B cell (primary cell): ENCODE measurements at regions of chr19 and their contacts with region 1.

Region 1: GRCh38 chr19:34145741-34146202 is 26.5 kb upstream of the LSM14A start:
- DNase-seq: peak; percentile 74
- ATAC-seq: peak; percentile 57
- H3K4me3 ChIP-seq: no peak overlapping the region
- H3K4me3 Mint-ChIP-seq: no peak overlapping the region
- H3K27ac ChIP-seq: no peak overlapping the region
- H3K27ac Mint-ChIP-seq: no peak overlapping the region
- H3K4me1 ChIP-seq: peaks cover 0 to 3% of the 10 kb centered on the region in 2 donors
- H3K4me1 Mint-ChIP-seq: no peaks in the 10 kb centered on the region
- H3K27me3 ChIP-seq: no peaks in the 10 kb centered on the region
- H3K27me3 Mint-ChIP-seq: no peaks in the 10 kb centered on the region
- CTCF ChIP-seq: peak; percentile 88

Region 2: GRCh38 chr19:33778089-33778791 is 367.5 kb before region 1 on chr19:
- CTCF ChIA-PET with region 1: interaction called, 29 read pairs
- POLR2A ChIA-PET with region 1: no interaction called
- intact Hi-C with region 1: no loop called
- DNase-seq: peak; percentile 87
- ATAC-seq: peak; percentile 100
- H3K4me3 ChIP-seq: no peak overlapping the region
- H3K4me3 Mint-ChIP-seq: no peak overlapping the region
- H3K27ac ChIP-seq: no peak overlapping the region
- H3K27ac Mint-ChIP-seq: no peak overlapping the region
- H3K4me1 ChIP-seq: peaks cover 3 to 4% of the 10 kb centered on the region in 2 donors
- H3K4me1 Mint-ChIP-seq: peaks cover 7% of the 10 kb centered on the region
- H3K27me3 ChIP-seq: peaks cover 0 to 27% (median 2%) of the 10 kb centered on the region in 4 experiments
- H3K27me3 Mint-ChIP-seq: peaks cover 50% of the 10 kb centered on the region
- CTCF ChIP-seq: peak; percentile 100

Region 3: GRCh38 chr19:33795370-33796163 is 350.2 kb before region 1 on chr19:
- CTCF ChIA-PET with region 1: interaction called, 8 read pairs
- POLR2A ChIA-PET with region 1: no interaction called
- intact Hi-C with region 1: loop called (anchors 5 kb)
- DNase-seq: peak; percentile 62
- ATAC-seq: peak; percentile 74
- H3K4me3 ChIP-seq: peak overlapping the region; percentile 23 to 65 (median 55)
- H3K4me3 Mint-ChIP-seq: peak overlapping the region; percentile 81
- H3K27ac ChIP-seq: no peak overlapping the region
- H3K27ac Mint-ChIP-seq: no peak overlapping the region
- H3K4me1 ChIP-seq: peaks cover 13 to 14% of the 10 kb centered on the region in 2 donors
- H3K4me1 Mint-ChIP-seq: peaks cover 9% of the 10 kb centered on the region
- H3K27me3 ChIP-seq: peaks cover 0 to 42% (median 17%) of the 10 kb centered on the region in 4 experiments
- H3K27me3 Mint-ChIP-seq: peaks cover 21% of the 10 kb centered on the region
- CTCF ChIP-seq: peak; percentile 75

Region 4: DNA sequence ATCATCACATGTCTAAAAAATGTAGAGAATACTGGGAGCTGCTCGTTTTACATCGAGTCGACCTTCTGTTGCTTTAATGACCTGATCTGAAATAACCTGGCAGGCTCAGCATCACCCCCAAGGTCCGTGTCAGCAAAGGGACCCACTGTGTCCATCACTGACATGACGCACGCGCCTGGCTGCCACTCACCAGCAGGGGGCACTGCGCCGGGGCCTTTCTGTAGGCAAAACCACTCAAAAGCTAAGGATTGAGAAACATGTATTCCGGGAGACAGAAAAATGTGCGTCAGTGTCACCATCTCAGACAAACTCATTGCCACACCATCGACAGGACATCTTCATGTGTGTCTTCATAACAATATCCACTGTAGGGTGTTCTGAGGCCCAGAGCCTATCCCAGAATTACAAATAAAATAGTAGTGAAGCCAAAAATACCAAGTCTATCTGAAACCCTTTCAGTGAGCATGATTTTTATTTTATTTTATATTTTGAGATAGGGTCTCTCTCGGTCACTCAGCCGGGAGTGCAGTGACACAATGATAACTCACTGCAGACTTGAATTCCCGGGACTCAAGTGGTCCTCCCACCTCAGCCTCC is 103.7 kb before region 1 on chr19:
- CTCF ChIA-PET with region 1: interaction called, 10 read pairs
- POLR2A ChIA-PET with region 1: no interaction called
- intact Hi-C with region 1: no loop called
- DNase-seq: peak; percentile 48
- ATAC-seq: no peak
- H3K4me3 ChIP-seq: no peak overlapping the region
- H3K4me3 Mint-ChIP-seq: no peak overlapping the region
- H3K27ac ChIP-seq: no peak overlapping the region
- H3K27ac Mint-ChIP-seq: peak overlapping the region; percentile 26
- H3K4me1 ChIP-seq: no peaks in the 10 kb centered on the region
- H3K4me1 Mint-ChIP-seq: no peaks in the 10 kb centered on the region
- H3K27me3 ChIP-seq: peaks cover 0 to 9% (median under 1%) of the 10 kb centered on the region in 4 experiments
- H3K27me3 Mint-ChIP-seq: peaks cover 21% of the 10 kb centered on the region
- CTCF ChIP-seq: peak; percentile 77

Region 5: GRCh38 chr19:34096020-34096915 is 49.5 kb before region 1 on chr19:
- CTCF ChIA-PET with region 1: interaction called, 12 read pairs
- POLR2A ChIA-PET with region 1: no interaction called
- intact Hi-C with region 1: no loop called
- DNase-seq: peak; percentile 51
- ATAC-seq: no peak
- H3K4me3 ChIP-seq: no peak overlapping the region
- H3K4me3 Mint-ChIP-seq: no peak overlapping the region
- H3K27ac ChIP-seq: no peak overlapping the region
- H3K27ac Mint-ChIP-seq: no peak overlapping the region
- H3K4me1 ChIP-seq: no peaks in the 10 kb centered on the region
- H3K4me1 Mint-ChIP-seq: peaks cover 2% of the 10 kb centered on the region
- H3K27me3 ChIP-seq: peaks cover 0 to 11% (median 0%) of the 10 kb centered on the region in 4 experiments
- H3K27me3 Mint-ChIP-seq: peaks cover 28% of the 10 kb centered on the region
- CTCF ChIP-seq: peak; percentile 69

Region 6: DNA sequence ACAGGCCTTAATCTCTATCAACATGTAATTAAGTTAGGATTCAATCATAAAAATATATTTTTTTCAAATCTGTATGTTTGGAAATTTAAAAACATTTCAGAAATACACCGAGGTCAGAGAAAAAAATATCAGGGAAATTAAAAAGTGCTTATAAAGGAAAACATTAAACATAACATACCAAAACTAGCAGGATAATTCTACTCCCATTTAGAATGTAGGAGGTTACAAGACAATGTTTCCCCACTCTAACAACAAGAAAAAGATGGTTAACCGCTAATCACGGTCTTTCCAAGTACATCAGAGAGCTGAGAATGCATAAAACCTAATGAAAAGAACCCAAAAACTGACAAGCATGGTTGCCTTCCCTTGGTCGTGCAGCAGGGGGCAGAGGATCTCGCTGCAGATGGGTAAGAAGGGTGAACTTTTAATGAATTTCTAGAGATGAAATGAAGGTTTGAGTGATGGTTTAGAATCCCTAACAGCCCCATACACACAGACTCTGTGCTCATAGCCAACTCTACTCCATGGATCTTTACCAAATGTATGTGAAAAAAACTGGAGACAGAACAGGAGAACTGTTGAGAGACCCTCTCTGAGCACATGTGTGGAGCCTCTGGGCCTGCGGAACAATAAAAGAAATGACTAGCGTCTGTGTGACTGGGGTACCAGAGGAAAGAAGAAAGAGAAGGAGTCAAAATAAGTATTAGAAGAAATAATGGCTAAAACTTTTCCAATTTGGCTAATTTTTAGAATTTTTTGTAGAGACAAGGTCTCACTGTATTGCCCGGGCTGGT is 24.7 kb before region 1 on chr19:
- CTCF ChIA-PET with region 1: interaction called, 68 read pairs
- POLR2A ChIA-PET with region 1: no interaction called
- intact Hi-C with region 1: no loop called
- DNase-seq: peak; percentile 55
- ATAC-seq: peak; percentile 24
- H3K4me3 ChIP-seq: no peak overlapping the region
- H3K4me3 Mint-ChIP-seq: no peak overlapping the region
- H3K27ac ChIP-seq: no peak overlapping the region
- H3K27ac Mint-ChIP-seq: no peak overlapping the region
- H3K4me1 ChIP-seq: no peaks in the 10 kb centered on the region
- H3K4me1 Mint-ChIP-seq: no peaks in the 10 kb centered on the region
- H3K27me3 ChIP-seq: peaks cover 0 to 4% (median 0%) of the 10 kb centered on the region in 4 experiments
- H3K27me3 Mint-ChIP-seq: peaks cover 15% of the 10 kb centered on the region
- CTCF ChIP-seq: peak; percentile 74

Region 7: DNA sequence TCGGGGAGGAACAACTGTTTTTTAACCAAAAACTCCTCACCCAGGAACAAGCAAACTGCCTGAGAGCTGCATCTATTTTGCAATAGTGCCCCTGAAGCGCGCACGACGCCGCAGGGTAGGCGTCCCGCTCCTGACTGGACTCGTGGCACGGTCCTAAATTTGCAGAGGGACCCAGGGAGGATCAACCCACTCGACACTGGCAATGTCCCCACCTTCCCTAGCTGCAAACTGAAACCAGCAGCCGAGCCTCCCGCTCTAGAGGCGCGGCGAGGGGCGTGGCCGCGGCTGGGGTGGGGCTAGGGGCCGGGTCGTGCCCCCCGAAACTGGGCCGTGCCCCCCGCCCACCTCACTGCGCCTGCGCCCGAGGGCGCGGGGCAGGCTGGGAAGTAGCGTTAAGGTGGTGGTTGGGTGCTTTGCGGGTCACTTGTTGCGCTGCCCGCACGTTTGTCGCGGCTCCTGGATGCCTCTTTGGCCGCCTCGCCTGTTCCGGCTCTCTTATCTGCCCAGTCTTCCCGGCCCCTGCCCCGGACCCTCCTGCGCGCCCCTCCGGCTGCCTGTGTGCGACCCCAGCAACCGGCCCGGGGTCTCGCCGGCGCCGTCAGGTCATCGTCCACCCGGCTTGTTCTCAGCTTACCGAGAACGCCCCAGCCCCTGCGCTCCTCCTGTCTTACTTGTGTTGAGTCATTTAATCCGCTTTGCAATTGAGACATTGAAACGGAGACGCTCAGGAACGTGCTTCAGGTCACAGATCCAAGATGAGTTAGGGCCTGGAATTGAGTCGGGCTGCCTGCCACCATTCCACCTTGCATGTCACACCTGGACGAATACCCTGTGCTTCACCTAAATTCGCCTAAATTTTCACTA is 11.3 kb before region 1 on chr19:
- CTCF ChIA-PET with region 1: interaction called, 4 read pairs
- POLR2A ChIA-PET with region 1: no interaction called
- intact Hi-C with region 1: loop called (anchors 1 kb)
- DNase-seq: peak; percentile 93
- ATAC-seq: peak; percentile 97
- H3K4me3 ChIP-seq: peak overlapping the region; percentile 65 to 95 (median 80)
- H3K4me3 Mint-ChIP-seq: peak overlapping the region; percentile 97
- H3K27ac ChIP-seq: peak overlapping the region; percentile 59 to 86
- H3K27ac Mint-ChIP-seq: peak overlapping the region; percentile 94
- H3K4me1 ChIP-seq: peaks cover 3 to 8% of the 10 kb centered on the region in 2 donors
- H3K4me1 Mint-ChIP-seq: peaks cover 14% of the 10 kb centered on the region
- H3K27me3 ChIP-seq: no peaks in the 10 kb centered on the region
- H3K27me3 Mint-ChIP-seq: peaks cover 4% of the 10 kb centered on the region
- CTCF ChIP-seq: no peak